ENCODE measurements at regions of chr1 and their contacts with region 1.

Region 1: DNA sequence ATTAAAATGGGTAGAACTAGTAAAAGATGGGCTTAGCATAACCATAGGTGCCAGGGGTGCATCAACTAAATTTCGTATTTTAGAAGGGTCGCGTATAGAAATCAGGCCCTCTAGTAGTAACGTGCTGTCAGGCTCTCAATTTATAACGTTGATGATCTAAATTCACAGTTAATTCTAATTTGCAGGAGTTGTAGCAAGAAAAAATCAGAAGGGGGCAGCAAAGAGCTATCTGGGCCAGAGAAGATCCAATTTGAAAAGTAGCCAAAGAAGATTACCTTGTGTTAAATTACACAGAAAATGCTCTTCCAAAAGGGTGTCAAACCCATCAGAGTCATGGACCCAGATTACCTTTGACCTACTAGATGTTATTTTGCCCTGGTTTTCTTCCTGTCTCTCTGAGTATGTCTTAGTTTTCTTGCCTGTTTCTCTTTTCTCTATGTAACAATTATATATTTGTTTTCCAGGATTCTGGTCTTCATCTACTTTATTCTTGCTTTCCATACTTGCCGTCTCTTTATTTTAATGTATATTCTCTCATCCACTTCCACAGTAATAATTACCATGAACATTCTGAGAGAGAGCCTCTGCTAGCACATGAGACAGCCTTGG is 1030.9 kb downstream of the AMY1C start:
- DNase-seq: no peak
- H3K4me3 ChIP-seq: no peak overlapping the region
- CTCF ChIP-seq: peak; percentile 52

Region 2: DNA sequence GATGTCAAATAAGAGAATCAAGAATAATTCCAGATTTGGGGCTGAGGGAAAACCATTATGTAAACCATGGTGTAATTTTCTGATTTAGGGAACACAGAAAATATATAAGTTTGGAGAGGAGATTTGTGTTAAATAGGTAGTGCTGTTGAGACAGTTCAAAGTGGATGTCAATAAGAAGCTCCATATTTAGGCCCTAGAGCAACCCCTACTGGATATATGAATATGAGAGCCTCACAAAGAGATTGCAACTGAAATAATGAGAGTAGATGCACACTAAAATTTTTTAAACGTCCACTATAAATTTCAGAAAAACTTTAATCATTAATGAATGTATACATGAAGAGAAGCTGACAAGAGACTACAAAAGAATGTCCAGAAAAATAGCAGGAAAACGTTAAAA is 828.1 kb after region 1 on chr1:
- CTCF ChIA-PET with region 1: interaction called, 23 read pairs
- POLR2A ChIA-PET with region 1: no interaction called
- DNase-seq: peak; percentile 2
- H3K4me3 ChIP-seq: no peak overlapping the region
- CTCF ChIP-seq: peak; percentile 24

Region 3: GRCh38 chr1:105793536-105794146 is 1013.1 kb after region 1 on chr1:
- CTCF ChIA-PET with region 1: interaction called, 21 read pairs
- POLR2A ChIA-PET with region 1: no interaction called
- DNase-seq: no peak
- H3K4me3 ChIP-seq: no peak overlapping the region
- CTCF ChIP-seq: peak; percentile 52